ENCODE measurements at regions of chr1 and their contacts with region 1.

Region 1: DNA sequence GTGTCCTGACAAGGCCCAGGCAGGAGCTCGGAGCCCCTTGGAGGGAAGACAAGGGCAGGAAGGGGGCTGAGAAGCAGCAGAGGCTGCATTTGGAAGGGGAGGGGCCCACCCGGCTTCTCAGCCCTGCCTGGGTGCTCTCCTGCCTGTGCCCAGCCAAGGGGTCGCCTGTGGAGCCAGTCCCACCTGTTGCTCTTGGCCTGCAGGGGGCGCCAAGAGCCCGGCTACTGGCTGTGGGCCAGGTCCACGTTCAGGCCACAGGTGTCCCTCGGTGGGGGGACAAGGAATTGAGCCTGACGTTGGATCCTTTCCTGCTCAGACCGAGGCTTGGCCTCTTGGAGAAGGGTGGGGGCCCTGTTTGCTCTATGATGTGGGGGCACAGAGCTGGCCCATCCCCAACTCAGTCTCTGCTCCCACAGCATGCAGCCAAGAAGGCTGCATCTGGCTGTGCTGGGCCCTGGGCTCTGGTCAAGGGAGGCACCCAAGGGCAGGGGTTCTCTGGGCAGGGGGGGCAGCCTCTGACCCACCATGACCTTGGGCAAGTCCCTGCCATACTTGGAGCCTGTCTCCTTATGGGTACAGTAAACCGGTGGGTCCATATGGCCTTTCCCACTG is 10.9 kb downstream of the WNT4 start:
- DNase-seq: peak in 4 of 5 donors; percentile 34 to 48 (median 40)
- H3K4me3 ChIP-seq: no peak overlapping the region
- H3K4me3 Mint-ChIP-seq: no peak overlapping the region
- H3K27ac ChIP-seq: no peak overlapping the region
- H3K27ac Mint-ChIP-seq: no peak overlapping the region
- H3K4me1 ChIP-seq: no peaks in the 10 kb centered on the region
- H3K4me1 Mint-ChIP-seq: peaks cover 0 to 2% (median 0%) of the 10 kb centered on the region in 4 donors
- H3K27me3 ChIP-seq: no peaks in the 10 kb centered on the region
- H3K27me3 Mint-ChIP-seq: no peaks in the 10 kb centered on the region

Region 2: GRCh38 chr1:22039594-22040285 is 92.2 kb before region 1 on chr1:
- CTCF ChIA-PET with region 1: no interaction called
- POLR2A ChIA-PET with region 1: no interaction called
- intact Hi-C with region 1: no loop called
- DNase-seq: peak; percentile 93 to 99 (median 98)
- H3K4me3 ChIP-seq: peak overlapping the region; percentile 24 to 53
- H3K4me3 Mint-ChIP-seq: peak overlapping the region; percentile 78 to 89 (median 84)
- H3K27ac ChIP-seq: peak overlapping the region; percentile 86
- H3K27ac Mint-ChIP-seq: peak overlapping the region; percentile 94 to 100 (median 99)
- H3K4me1 ChIP-seq: peaks cover 75% of the 10 kb centered on the region
- H3K4me1 Mint-ChIP-seq: peaks cover 40 to 76% (median 54%) of the 10 kb centered on the region in 4 donors
- H3K27me3 ChIP-seq: no peaks in the 10 kb centered on the region
- H3K27me3 Mint-ChIP-seq: no peaks in the 10 kb centered on the region

Region 3: GRCh38 chr1:22309572-22309971 is 177.6 kb after region 1 on chr1:
- CTCF ChIA-PET with region 1: no interaction called
- POLR2A ChIA-PET with region 1: no interaction called
- intact Hi-C with region 1: no loop called
- DNase-seq: no peak
- H3K4me3 ChIP-seq: no peak overlapping the region
- H3K4me3 Mint-ChIP-seq: no peak overlapping the region
- H3K27ac ChIP-seq: no peak overlapping the region
- H3K27ac Mint-ChIP-seq: no peak overlapping the region
- H3K4me1 ChIP-seq: no peaks in the 10 kb centered on the region
- H3K4me1 Mint-ChIP-seq: no peaks in the 10 kb centered on the region
- H3K27me3 ChIP-seq: no peaks in the 10 kb centered on the region
- H3K27me3 Mint-ChIP-seq: peaks cover 25 to 28% of the 10 kb centered on the region in 2 donors

Region 4: GRCh38 chr1:22641906-22642636 is 510.1 kb after region 1 on chr1:
- CTCF ChIA-PET with region 1: interaction called, 3 read pairs
- POLR2A ChIA-PET with region 1: no interaction called
- intact Hi-C with region 1: loop called (anchors 5 kb)
- DNase-seq: peak; percentile 44 to 62 (median 48)
- H3K4me3 ChIP-seq: no peak overlapping the region
- H3K4me3 Mint-ChIP-seq: no peak overlapping the region
- H3K27ac ChIP-seq: no peak overlapping the region
- H3K27ac Mint-ChIP-seq: peak overlapping the region in 1 of 7 donors; percentile 62
- H3K4me1 ChIP-seq: peaks cover 5% of the 10 kb centered on the region
- H3K4me1 Mint-ChIP-seq: no peaks in the 10 kb centered on the region
- H3K27me3 ChIP-seq: peaks cover 5% of the 10 kb centered on the region
- H3K27me3 Mint-ChIP-seq: peaks cover 6 to 21% of the 10 kb centered on the region in 2 donors